ENCODE measurements at regions of chr16 and their contacts with region 1.

Region 1: GRCh38 chr16:10521681-10522274 is 58.6 kb downstream of the EMP2 start:
- DNase-seq: peak in 1 of 2 experiments; percentile 62
- H3K4me3 ChIP-seq: no peak overlapping the region
- H3K27ac ChIP-seq: no peak overlapping the region
- H3K4me1 ChIP-seq: no peaks in the 10 kb centered on the region
- H3K27me3 ChIP-seq: no peaks in the 10 kb centered on the region
- CTCF ChIP-seq: peak; percentile 64 to 90 (median 89)
- EP300 ChIP-seq: no peak
- POLR2A ChIP-seq: no peak
- RAD21 ChIP-seq: peak; percentile 78 to 86

Region 2: GRCh38 chr16:10356870-10357842 is 164.6 kb before region 1 on chr16:
- CTCF ChIA-PET with region 1: no interaction called
- POLR2A ChIA-PET with region 1: no interaction called
- DNase-seq: no peak
- H3K4me3 ChIP-seq: no peak overlapping the region
- H3K27ac ChIP-seq: no peak overlapping the region
- H3K4me1 ChIP-seq: no peaks in the 10 kb centered on the region
- H3K27me3 ChIP-seq: no peaks in the 10 kb centered on the region
- CTCF ChIP-seq: no peak
- EP300 ChIP-seq: no peak
- POLR2A ChIP-seq: no peak
- RAD21 ChIP-seq: no peak

Region 3: GRCh38 chr16:10408824-10409381 is 112.9 kb before region 1 on chr16:
- CTCF ChIA-PET with region 1: no interaction called
- POLR2A ChIA-PET with region 1: no interaction called
- DNase-seq: no peak
- H3K4me3 ChIP-seq: no peak overlapping the region
- H3K27ac ChIP-seq: no peak overlapping the region
- H3K4me1 ChIP-seq: no peaks in the 10 kb centered on the region
- H3K27me3 ChIP-seq: no peaks in the 10 kb centered on the region
- CTCF ChIP-seq: no peak
- EP300 ChIP-seq: no peak
- POLR2A ChIP-seq: no peak
- RAD21 ChIP-seq: no peak

Region 4: DNA sequence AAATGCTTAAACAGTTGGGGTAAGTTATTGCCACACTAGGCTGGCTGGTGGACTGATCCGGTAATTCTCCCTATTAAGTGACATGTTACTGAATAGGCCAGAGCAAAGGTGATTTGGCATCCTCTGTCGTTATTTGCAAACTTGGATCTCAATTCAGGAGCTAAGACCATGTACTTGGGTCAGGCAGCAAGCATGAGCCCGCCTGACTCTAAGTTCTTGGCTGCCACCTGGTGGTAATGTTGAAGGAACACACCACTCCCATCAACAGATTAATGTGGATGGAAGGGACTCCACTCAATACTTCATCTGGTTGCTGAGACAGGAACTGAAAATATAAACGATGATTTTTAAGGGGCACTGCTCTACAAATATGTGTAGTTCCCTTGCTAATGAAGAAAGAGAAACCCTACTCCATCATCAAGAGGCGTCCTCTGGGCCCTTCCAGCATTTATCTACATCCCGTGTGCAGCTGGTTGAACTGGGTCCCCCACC is 12.2 kb before region 1 on chr16:
- CTCF ChIA-PET with region 1: interaction called, 35 read pairs
- POLR2A ChIA-PET with region 1: no interaction called
- DNase-seq: peak; percentile 33 to 63
- H3K4me3 ChIP-seq: no peak overlapping the region
- H3K27ac ChIP-seq: no peak overlapping the region
- H3K4me1 ChIP-seq: peaks cover 0 to 9% (median 3%) of the 10 kb centered on the region in 4 experiments; a peak in 4 of 7 replicates
- H3K27me3 ChIP-seq: no peaks in the 10 kb centered on the region
- CTCF ChIP-seq: peak; percentile 64 to 93 (median 87)
- EP300 ChIP-seq: no peak
- POLR2A ChIP-seq: no peak
- RAD21 ChIP-seq: peak; percentile 97

Region 5: GRCh38 chr16:10541366-10541765 is 19.6 kb after region 1 on chr16:
- CTCF ChIA-PET with region 1: interaction called, 11 read pairs
- POLR2A ChIA-PET with region 1: no interaction called
- DNase-seq: no peak
- H3K4me3 ChIP-seq: no peak overlapping the region
- H3K27ac ChIP-seq: no peak overlapping the region
- H3K4me1 ChIP-seq: no peaks in the 10 kb centered on the region
- H3K27me3 ChIP-seq: no peaks in the 10 kb centered on the region
- CTCF ChIP-seq: no peak
- EP300 ChIP-seq: no peak
- POLR2A ChIP-seq: no peak
- RAD21 ChIP-seq: no peak

Region 6: GRCh38 chr16:10566589-10566988 is 44.8 kb after region 1 on chr16:
- CTCF ChIA-PET with region 1: interaction called, 16 read pairs
- POLR2A ChIA-PET with region 1: no interaction called
- DNase-seq: no peak
- H3K4me3 ChIP-seq: no peak overlapping the region
- H3K27ac ChIP-seq: no peak overlapping the region
- H3K4me1 ChIP-seq: peaks cover 0 to 4% (median 0%) of the 10 kb centered on the region in 4 experiments; a peak in 1 of 7 replicates
- H3K27me3 ChIP-seq: no peaks in the 10 kb centered on the region
- CTCF ChIP-seq: peak; percentile 33 to 45 (median 39); a peak in 3 of 4 replicates
- EP300 ChIP-seq: no peak
- POLR2A ChIP-seq: no peak
- RAD21 ChIP-seq: peak; percentile 36 to 52; a peak in 3 of 4 replicates

Region 7: DNA sequence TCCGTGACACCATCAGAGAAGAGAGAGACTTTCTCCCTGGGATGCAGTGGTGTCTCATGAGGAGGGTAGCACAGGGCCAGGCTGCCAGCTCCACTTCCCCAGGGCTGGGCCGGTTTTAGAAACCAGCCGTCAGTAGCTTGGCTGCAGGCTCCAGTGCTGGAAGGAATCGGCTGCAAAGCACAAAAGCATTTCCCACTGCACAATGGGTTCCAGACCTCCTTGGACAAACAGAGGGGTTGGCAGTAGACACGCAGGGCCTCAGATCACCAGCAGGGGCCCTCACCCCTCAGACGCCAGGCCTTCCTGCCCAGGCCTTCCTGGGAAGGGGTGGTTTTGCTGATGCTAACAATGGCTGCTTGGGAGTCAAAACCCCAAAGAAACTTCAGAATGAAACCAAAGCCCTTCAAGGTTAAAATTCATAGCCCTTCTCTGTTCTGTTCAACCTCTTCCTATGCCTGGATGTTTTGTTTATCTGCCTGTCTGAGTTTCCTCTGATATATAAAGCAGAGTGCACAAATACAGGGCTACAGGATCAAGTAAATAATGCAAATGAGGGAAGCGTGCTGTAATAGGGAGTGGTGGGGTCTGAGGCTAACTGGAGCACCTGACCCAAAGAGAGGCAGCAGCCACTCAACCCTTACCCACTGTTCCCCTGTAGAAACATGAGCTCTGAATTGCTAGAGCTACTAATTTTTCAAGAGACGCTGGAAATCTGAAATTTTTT is 146.7 kb after region 1 on chr16:
- CTCF ChIA-PET with region 1: interaction called, 11 read pairs
- POLR2A ChIA-PET with region 1: no interaction called
- DNase-seq: peak in 1 of 2 experiments; percentile 57
- H3K4me3 ChIP-seq: no peak overlapping the region
- H3K27ac ChIP-seq: no peak overlapping the region
- H3K4me1 ChIP-seq: peaks cover 0 to 3% (median under 1%) of the 10 kb centered on the region in 4 experiments; a peak in 3 of 7 replicates
- H3K27me3 ChIP-seq: no peaks in the 10 kb centered on the region
- CTCF ChIP-seq: peak; percentile 57 to 80 (median 79)
- EP300 ChIP-seq: no peak
- POLR2A ChIP-seq: no peak
- RAD21 ChIP-seq: peak; percentile 54 to 57

Region 8: GRCh38 chr16:10737068-10737625 is 215.4 kb after region 1 on chr16:
- CTCF ChIA-PET with region 1: interaction called, 70 read pairs
- POLR2A ChIA-PET with region 1: no interaction called
- DNase-seq: peak; percentile 29 to 68
- H3K4me3 ChIP-seq: no peak overlapping the region
- H3K27ac ChIP-seq: no peak overlapping the region
- H3K4me1 ChIP-seq: no peaks in the 10 kb centered on the region; a peak in 1 of 7 replicates
- H3K27me3 ChIP-seq: no peaks in the 10 kb centered on the region
- CTCF ChIP-seq: peak; percentile 44 to 85 (median 81)
- EP300 ChIP-seq: no peak
- POLR2A ChIP-seq: no peak
- RAD21 ChIP-seq: peak; percentile 95

Region 9: GRCh38 chr16:10743610-10744393 is 222.0 kb after region 1 on chr16 and contains the start of gene NUBP1:
- CTCF ChIA-PET with region 1: interaction called, 70 read pairs
- POLR2A ChIA-PET with region 1: interaction called, 4 read pairs
- DNase-seq: peak; percentile 98 to 100
- H3K4me3 ChIP-seq: peak within 1 kb of the TSS; percentile 54 to 81 (median 73)
- H3K27ac ChIP-seq: peak within 1 kb of the TSS; percentile 89; the same call in 1 of the 2 replicates
- H3K4me1 ChIP-seq: peaks cover 0 to 4% (median 2%) of the 10 kb centered on the region in 4 experiments; a peak in 5 of 7 replicates
- H3K27me3 ChIP-seq: no peaks in the 10 kb centered on the region
- CTCF ChIP-seq: no peak
- EP300 ChIP-seq: no peak
- POLR2A ChIP-seq: peak; percentile 59 to 90
- RAD21 ChIP-seq: no peak
- total RNA-seq, gene NUBP1: 28.2 and 32.1 TPM in 2 replicates